ENCODE measurements at regions of chr7 and their contacts with region 1.

Region 1: GRCh38 chr7:31122649-31123058 is 70.5 kb downstream of the ADCYAP1R1 start:
- DNase-seq: peak; percentile 57
- H3K4me3 Mint-ChIP-seq: no peak overlapping the region
- H3K27ac Mint-ChIP-seq: no peak overlapping the region
- H3K4me1 Mint-ChIP-seq: no peaks in the 10 kb centered on the region
- H3K27me3 Mint-ChIP-seq: peaks cover 9% of the 10 kb centered on the region

Region 2: DNA sequence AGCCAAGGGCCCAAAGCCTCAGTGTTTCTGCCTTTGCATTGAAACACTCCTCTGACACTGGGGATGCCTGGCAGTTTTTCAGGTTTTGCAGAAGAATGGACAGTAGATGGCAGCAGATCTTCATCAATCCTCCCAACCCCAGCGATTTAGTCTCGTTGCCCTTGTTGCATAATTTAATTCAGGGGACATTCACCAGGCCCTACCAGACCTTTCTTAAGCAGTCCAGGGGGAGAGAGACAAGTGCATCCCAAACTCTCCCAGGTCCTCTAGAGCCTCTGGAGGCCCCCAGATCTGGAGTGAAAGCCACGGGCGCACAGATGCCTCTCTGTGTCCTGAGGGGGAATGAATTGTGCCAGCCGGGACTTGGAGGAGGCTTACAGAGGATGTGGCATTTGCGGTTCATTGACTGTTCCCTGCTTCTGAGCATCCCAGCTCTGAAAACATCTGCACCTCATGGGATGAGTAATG is 321.8 kb before region 1 on chr7:
- CTCF ChIA-PET with region 1: interaction called, 10 read pairs
- POLR2A ChIA-PET with region 1: no interaction called
- intact Hi-C with region 1: loop called (anchors 2 kb)
- DNase-seq: peak; percentile 25
- H3K4me3 Mint-ChIP-seq: no peak overlapping the region
- H3K27ac Mint-ChIP-seq: no peak overlapping the region
- H3K4me1 Mint-ChIP-seq: peaks cover 8% of the 10 kb centered on the region
- H3K27me3 Mint-ChIP-seq: no peaks in the 10 kb centered on the region